ENCODE measurements at regions of chr20 and their contacts with region 1.

Region 1: GRCh38 chr20:49541733-49542513 is 26.0 kb downstream of the PTGIS start:
- DNase-seq: peak in 4 of 5 donors; percentile 71 to 89 (median 74)
- H3K4me3 ChIP-seq: no peak overlapping the region
- H3K27ac ChIP-seq: no peak overlapping the region
- H3K4me1 ChIP-seq: no peaks in the 10 kb centered on the region
- H3K27me3 ChIP-seq: no peaks in the 10 kb centered on the region
- CTCF ChIP-seq: peak; percentile 88

Region 2: DNA sequence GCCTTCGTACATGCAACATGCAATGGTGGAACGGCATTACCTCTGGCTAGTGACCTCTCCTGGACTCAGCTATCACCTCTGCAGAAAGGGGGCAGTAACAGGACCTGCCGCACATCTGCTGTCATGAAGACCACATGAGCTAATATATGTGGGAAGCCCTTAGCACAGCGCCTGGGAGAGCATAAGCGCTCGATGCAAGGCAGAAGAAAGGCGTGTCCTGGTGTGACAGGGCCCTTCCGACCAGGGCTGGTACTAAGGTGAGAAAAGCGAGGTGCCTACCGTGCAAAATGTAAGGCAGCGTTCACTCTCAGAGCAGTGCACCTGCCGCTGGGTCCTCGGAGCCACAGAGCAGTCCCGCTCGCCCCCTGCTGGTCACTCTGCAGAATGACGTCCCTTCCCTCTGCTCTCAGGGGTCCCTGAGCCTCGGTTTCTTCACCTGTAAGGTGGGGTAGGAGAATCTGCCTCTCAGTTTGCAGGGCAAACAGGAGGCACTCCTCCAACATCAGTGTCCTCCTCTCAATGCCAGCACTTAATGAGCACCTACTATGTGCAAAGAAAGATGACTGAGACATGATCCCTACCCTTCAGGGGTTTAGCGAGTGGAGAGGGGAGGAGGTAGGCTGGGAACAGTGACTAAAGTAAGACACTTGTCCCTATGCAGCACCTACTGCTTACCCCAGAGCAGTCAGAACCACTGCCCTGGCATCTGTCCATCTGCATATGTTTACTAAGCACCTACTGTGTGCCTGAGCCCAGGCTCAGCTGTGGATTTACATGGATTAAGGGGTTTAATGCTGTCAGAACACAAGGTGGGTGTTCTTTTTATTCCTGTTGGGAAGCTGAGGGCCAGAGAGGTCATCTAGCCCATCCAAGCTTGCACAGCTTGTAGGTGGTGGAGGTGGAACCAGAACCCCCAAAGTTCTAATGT is 67.1 kb after region 1 on chr20:
- intact Hi-C with region 1: loop called (anchors 5 kb)
- DNase-seq: peak; percentile 70 to 82 (median 76)
- H3K4me3 ChIP-seq: peak overlapping the region; percentile 5 to 27 (median 11)
- H3K27ac ChIP-seq: no peak overlapping the region
- H3K4me1 ChIP-seq: peaks cover 0 to 7% (median 0%) of the 10 kb centered on the region in 3 donors
- H3K27me3 ChIP-seq: no peaks in the 10 kb centered on the region
- CTCF ChIP-seq: peak; percentile 96

Measured in kidney (tissue), 22 donors.